Psoas muscle (tissue), 8 donors: ENCODE measurements at regions of chr13 and their contacts with region 1.

Region 1: GRCh38 chr13:113374511-113375175 is 10.7 kb upstream of the GRTP1 start:
- DNase-seq: no peak
- ATAC-seq: peak in 2 of 4 donors; percentile 21 to 26
- H3K4me3 ChIP-seq: no peak overlapping the region
- H3K27ac ChIP-seq: no peak overlapping the region
- H3K4me1 ChIP-seq: no peaks in the 10 kb centered on the region
- H3K27me3 ChIP-seq: no peaks in the 10 kb centered on the region
- CTCF ChIP-seq: no peak

Region 2: DNA sequence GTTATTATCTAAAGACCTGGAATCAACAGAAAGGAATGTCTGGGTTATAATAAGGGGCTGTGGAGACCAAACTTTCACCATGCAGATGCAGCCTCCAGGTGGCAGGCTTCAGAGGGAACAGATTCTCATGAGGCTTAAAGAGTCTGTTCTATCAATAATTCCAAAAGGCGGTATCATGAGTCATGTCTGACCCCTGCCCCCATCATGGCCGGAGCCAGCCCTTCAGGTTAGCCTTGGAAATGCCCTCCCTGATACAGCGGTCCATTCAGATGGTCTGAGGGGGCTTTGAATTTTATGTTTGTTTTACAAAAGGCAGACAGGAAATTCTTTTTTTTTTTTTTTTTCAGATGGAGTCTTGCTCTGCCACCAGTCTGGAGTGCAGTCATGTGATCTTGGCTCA is 99.3 kb before region 1 on chr13:
- intact Hi-C with region 1: loop called in 1 of 2 experiments (anchors 1 kb)
- DNase-seq: peak; percentile 41 to 66
- ATAC-seq: peak; percentile 78 to 93 (median 85)
- H3K4me3 ChIP-seq: no peak overlapping the region
- H3K27ac ChIP-seq: no peak overlapping the region
- H3K4me1 ChIP-seq: no peaks in the 10 kb centered on the region
- H3K27me3 ChIP-seq: no peaks in the 10 kb centered on the region
- CTCF ChIP-seq: peak; percentile 62